Natural killer cell (primary cell): ENCODE measurements at regions of chr6 and their contacts with region 1.

Region 1: GRCh38 chr6:139364302-139364981 is 10.0 kb downstream of the CITED2 start:
- DNase-seq: peak in 1 of 2 donors; percentile 76
- ATAC-seq: peak; percentile 75 to 78 (median 76)
- H3K4me3 ChIP-seq: no peak overlapping the region
- H3K4me3 Mint-ChIP-seq: no peak overlapping the region
- H3K27ac ChIP-seq: no peak overlapping the region
- H3K27ac Mint-ChIP-seq: peak overlapping the region; percentile 3 to 64
- H3K4me1 ChIP-seq: peaks cover 3% of the 10 kb centered on the region
- H3K4me1 Mint-ChIP-seq: peaks cover 33 to 36% of the 10 kb centered on the region in 2 donors
- H3K27me3 ChIP-seq: no peaks in the 10 kb centered on the region
- H3K27me3 Mint-ChIP-seq: no peaks in the 10 kb centered on the region
- CTCF ChIP-seq: peak; percentile 90

Region 2: DNA sequence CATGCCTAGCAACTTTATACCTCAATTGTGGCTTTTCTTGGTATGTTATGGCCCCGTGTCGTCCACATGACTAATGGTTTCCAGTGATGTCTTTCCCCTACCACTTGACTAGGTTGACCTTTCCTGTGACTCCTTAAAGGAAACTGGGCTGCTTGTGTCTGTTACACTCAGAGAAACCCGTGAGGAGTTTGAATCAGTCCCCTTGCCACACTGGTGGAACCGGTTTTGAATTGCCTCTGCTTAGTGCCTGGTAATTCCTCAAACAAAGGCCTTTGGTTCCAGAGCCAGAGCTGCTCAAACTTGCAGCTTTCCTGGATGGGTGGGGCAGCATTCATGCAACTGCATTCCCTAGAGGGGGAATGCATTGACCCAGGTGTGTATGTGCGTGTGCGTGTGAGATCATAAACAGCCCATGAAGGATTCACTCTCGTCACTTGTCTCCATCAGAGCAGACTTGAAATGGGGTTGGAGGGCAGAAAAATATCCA is 546.6 kb before region 1 on chr6:
- intact Hi-C with region 1: loop called (anchors 2 kb)
- DNase-seq: no peak
- ATAC-seq: no peak
- H3K4me3 ChIP-seq: no peak overlapping the region
- H3K4me3 Mint-ChIP-seq: no peak overlapping the region
- H3K27ac ChIP-seq: no peak overlapping the region
- H3K27ac Mint-ChIP-seq: no peak overlapping the region
- H3K4me1 ChIP-seq: no peaks in the 10 kb centered on the region
- H3K4me1 Mint-ChIP-seq: no peaks in the 10 kb centered on the region
- H3K27me3 ChIP-seq: no peaks in the 10 kb centered on the region
- H3K27me3 Mint-ChIP-seq: peaks cover 3 to 7% of the 10 kb centered on the region in 2 donors
- CTCF ChIP-seq: no peak

Region 3: DNA sequence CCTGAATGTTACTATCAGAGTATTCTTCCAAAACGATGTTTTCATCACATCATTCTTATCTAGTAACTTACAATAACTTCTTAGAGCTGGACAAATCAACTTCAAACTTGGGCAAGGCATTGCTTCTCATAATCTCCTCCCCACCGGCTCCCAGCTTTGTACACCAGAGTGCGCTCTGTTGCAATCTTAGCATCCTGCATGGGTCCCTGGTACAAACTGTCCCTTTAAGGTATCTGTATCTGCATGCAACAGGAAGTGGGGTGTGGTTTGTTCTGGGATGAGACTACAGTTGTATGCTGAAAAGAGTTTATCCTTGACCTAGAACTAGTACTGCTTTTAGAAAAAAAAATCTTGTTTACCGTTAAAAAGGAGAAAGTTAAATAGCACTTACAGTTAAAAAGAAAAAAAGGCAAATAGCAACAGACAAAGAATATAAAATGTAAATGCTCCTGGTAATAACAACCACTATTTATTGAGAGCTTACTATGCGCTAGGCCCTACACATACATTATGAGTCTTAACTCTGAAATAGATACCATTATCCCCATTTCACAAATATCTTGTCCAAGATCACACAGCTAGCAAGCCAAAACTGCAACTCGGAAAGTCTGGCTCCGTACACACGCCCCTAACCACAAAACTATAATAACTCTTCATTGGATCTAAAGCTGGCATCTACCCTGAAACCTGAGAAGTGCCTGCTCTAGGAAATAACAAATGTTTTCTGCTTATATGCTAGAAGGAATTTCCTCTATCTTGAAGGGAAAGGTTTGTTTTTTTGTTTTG is 239.4 kb before region 1 on chr6:
- intact Hi-C with region 1: loop called (anchors 1 kb)
- DNase-seq: peak; percentile 54 to 93
- ATAC-seq: peak; percentile 99 to 100 (median 99)
- H3K4me3 ChIP-seq: no peak overlapping the region
- H3K4me3 Mint-ChIP-seq: peak overlapping the region; percentile 81
- H3K27ac ChIP-seq: peak overlapping the region; percentile 42
- H3K27ac Mint-ChIP-seq: peak overlapping the region; percentile 84 to 91
- H3K4me1 ChIP-seq: peaks cover 17% of the 10 kb centered on the region
- H3K4me1 Mint-ChIP-seq: peaks cover 25% of the 10 kb centered on the region in 2 donors
- H3K27me3 ChIP-seq: no peaks in the 10 kb centered on the region
- H3K27me3 Mint-ChIP-seq: no peaks in the 10 kb centered on the region
- CTCF ChIP-seq: peak; percentile 67

Region 4: GRCh38 chr6:139219271-139219729 is 145.1 kb before region 1 on chr6:
- intact Hi-C with region 1: loop called (anchors 1 kb)
- DNase-seq: peak; percentile 54 to 85
- ATAC-seq: peak; percentile 93 to 100 (median 99)
- H3K4me3 ChIP-seq: no peak overlapping the region
- H3K4me3 Mint-ChIP-seq: peak overlapping the region; percentile 4
- H3K27ac ChIP-seq: no peak overlapping the region
- H3K27ac Mint-ChIP-seq: peak overlapping the region; percentile 30 to 59
- H3K4me1 ChIP-seq: peaks cover 5% of the 10 kb centered on the region
- H3K4me1 Mint-ChIP-seq: peaks cover 5 to 8% of the 10 kb centered on the region in 2 donors
- H3K27me3 ChIP-seq: no peaks in the 10 kb centered on the region
- H3K27me3 Mint-ChIP-seq: no peaks in the 10 kb centered on the region
- CTCF ChIP-seq: peak; percentile 78